ENCODE measurements at regions of chr7 and their contacts with region 1.

Region 1: GRCh38 chr7:111855161-111855856 is 293.0 kb upstream of the IMMP2L start:
- DNase-seq: no peak
- ATAC-seq: peak; percentile 65 to 80
- H3K4me3 ChIP-seq: no peak overlapping the region
- H3K27ac ChIP-seq: no peak overlapping the region
- H3K4me1 ChIP-seq: no peaks in the 10 kb centered on the region
- H3K27me3 ChIP-seq: no peaks in the 10 kb centered on the region

Region 2: GRCh38 chr7:111763221-111763801 is 92.0 kb before region 1 on chr7:
- intact Hi-C with region 1: loop called in 3 of 4 experiments (anchors 10 kb)
- DNase-seq: peak in 2 of 3 donors; percentile 38 to 61
- ATAC-seq: peak; percentile 43 to 65
- H3K4me3 ChIP-seq: no peak overlapping the region
- H3K27ac ChIP-seq: no peak overlapping the region
- H3K4me1 ChIP-seq: no peaks in the 10 kb centered on the region
- H3K27me3 ChIP-seq: no peaks in the 10 kb centered on the region